ENCODE measurements at regions of chr12 and their contacts with region 1.

Region 1: GRCh38 chr12:6062757-6063735 is 61.4 kb downstream of the VWF start:
- DNase-seq: peak in 3 of 6 donors; percentile 15 to 67 (median 46)
- ATAC-seq: peak; percentile 77 to 89 (median 84)
- H3K4me3 ChIP-seq: no peak overlapping the region
- H3K27ac ChIP-seq: no peak overlapping the region
- H3K4me1 ChIP-seq: no peaks in the 10 kb centered on the region
- H3K27me3 ChIP-seq: no peaks in the 10 kb centered on the region
- CTCF ChIP-seq: peak; percentile 61 to 85 (median 70)

Region 2: GRCh38 chr12:6140651-6141447 is 77.8 kb after region 1 on chr12:
- intact Hi-C with region 1: no loop called
- DNase-seq: peak in 1 of 6 donors; percentile 40
- ATAC-seq: peak in 2 of 4 donors; percentile 69 to 71
- H3K4me3 ChIP-seq: no peak overlapping the region
- H3K27ac ChIP-seq: peak overlapping the region in 2 of 4 donors; percentile 51 to 74
- H3K4me1 ChIP-seq: no peaks in the 10 kb centered on the region
- H3K27me3 ChIP-seq: no peaks in the 10 kb centered on the region
- CTCF ChIP-seq: no peak

Region 3: DNA sequence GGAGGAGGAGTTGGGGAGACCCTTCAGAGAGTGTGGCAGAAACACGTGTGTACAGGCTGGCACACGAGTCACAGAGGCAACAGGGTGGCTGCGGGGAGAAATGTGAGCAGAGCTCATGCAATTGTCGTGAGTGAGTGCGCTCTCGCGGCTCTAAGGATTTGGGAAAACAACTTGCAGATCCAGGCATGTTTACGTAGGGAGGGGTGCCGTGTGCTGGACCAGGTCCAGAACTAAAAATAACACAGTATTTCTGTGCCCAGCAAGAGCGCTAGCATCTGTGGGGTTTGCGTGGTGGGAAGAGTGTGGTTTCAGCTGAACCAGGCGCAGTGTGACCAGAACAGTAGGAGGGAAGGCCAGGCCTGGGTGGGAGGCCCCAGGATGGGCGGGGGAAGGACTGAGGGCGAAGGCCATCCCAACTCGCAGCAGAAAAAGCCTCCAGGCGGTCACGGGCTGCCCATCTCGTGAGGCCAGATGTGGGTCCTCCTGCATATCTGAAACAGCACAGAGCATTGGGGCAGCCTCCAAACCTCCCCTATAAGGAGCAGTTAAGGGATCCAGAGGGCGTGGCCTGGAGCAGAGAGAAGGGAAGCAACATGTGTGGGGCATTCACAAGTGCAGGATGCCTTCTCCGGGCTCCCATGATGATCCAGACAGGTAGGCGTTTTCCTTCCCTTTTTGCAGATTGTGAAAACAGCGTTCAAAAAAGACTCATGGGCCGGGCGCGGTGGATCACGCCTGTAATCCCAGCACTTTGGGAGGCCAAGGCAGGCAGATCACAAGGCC is 119.3 kb after region 1 on chr12:
- intact Hi-C with region 1: loop called in 1 of 3 experiments (anchors 10 kb)
- DNase-seq: peak in 1 of 6 donors; percentile 47
- ATAC-seq: peak; percentile 14 to 62 (median 48)
- H3K4me3 ChIP-seq: no peak overlapping the region
- H3K27ac ChIP-seq: peak overlapping the region in 2 of 4 donors; percentile 4 to 42
- H3K4me1 ChIP-seq: peaks cover 0 to 8% (median 6%) of the 10 kb centered on the region in 3 donors
- H3K27me3 ChIP-seq: no peaks in the 10 kb centered on the region
- CTCF ChIP-seq: no peak

Measured in pancreas (tissue), 10 donors.